GM13977 (cell line): ENCODE measurements at regions of chr14 and their contacts with region 1.

Region 1: DNA sequence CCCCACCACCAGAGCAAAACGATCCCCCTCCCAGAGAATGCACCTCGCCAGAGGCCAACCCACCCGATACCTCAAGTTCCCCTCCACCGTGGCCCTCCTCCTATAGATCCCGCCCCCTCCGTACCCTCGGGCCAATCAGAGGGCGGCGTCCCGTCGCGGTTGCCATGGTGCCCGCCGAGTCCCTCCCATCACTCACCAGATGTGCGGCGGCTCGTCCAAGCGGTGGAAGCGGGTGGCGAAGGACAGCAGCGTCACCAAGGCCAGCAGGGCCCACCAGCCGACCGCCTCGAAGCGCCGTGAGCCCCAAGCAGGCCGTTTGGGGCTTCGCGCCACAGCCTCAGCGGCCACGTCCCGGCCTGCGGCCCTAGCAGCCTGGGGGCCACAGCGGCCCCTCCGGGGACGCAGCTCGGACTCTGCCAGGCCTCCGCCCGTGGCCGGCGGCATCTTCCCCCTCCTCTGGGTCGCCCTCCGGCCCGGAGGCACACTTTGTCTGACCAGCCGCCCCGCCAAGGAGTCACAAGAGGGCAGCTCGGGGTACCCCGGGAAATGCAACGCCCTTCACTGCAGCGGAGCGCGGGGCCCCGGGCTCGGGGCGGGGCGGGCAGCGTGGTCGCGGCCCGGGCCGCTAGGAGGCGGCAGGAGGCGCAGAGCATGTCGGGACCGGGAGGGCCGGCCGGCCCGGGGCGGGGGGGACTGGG is at the start of gene POMT2:
- DNase-seq: peak; percentile 91
- CTCF ChIP-seq: peak; percentile 35

Region 2: GRCh38 chr14:76876076-76876475 is 444.3 kb before region 1 on chr14:
- in situ Hi-C with region 1: loop called (anchors 25 kb)
- DNase-seq: peak; percentile 77
- CTCF ChIP-seq: peak; percentile 95

Region 3: GRCh38 chr14:76947078-76947837 is 373.1 kb before region 1 on chr14:
- in situ Hi-C with region 1: no loop called
- DNase-seq: peak; percentile 85
- CTCF ChIP-seq: peak; percentile 69

Region 4: GRCh38 chr14:77007975-77008421 is 312.4 kb before region 1 on chr14:
- in situ Hi-C with region 1: no loop called
- DNase-seq: no peak
- CTCF ChIP-seq: no peak

Region 5: GRCh38 chr14:77124345-77125280 is 195.8 kb before region 1 on chr14:
- in situ Hi-C with region 1: no loop called
- DNase-seq: peak; percentile 79
- CTCF ChIP-seq: peak; percentile 87

Region 6: GRCh38 chr14:77554207-77554606 is 233.8 kb after region 1 on chr14:
- in situ Hi-C with region 1: no loop called
- DNase-seq: no peak
- CTCF ChIP-seq: no peak